ENCODE measurements at regions of chr22 and their contacts with region 1.

Region 1: DNA sequence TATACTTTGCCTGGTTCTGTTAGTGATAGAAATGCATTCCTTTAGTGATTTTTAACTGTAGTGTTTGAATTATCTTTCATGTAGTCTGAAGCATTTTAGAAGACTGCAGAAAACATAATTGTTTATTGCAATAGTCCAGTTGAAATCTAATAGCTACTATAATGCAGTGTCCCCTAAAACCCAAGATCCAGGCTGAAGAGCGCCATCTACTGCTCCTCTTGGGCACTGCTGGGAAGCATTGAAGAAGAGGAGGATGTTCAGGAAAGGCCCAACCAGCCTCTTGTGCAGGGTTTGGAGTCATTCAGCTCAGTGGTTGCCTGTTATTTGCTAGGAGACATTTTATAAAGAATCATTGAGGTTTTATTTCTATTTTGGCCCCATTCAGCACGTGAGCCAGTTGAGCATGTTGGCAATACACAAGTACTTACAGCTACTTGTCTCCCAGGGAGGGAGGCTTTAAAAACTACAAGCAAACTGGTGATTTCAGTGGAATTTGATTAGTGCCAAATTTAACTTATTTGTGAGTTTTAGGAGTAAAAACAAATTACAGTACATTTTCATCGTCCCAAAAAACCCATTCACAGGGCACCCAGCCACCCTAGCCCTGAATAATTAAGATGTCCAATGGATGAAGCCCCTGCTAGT is 74.9 kb upstream of the HORMAD2 start:
- DNase-seq: peak; percentile 56 to 74 (median 62)
- H3K4me3 ChIP-seq: no peak overlapping the region
- H3K27ac ChIP-seq: no peak overlapping the region
- H3K4me1 ChIP-seq: no peaks in the 10 kb centered on the region
- H3K27me3 ChIP-seq: no peaks in the 10 kb centered on the region

Region 2: GRCh38 chr22:29580200-29580810 is 425.0 kb before region 1 on chr22:
- CTCF ChIA-PET with region 1: no interaction called
- POLR2A ChIA-PET with region 1: no interaction called
- DNase-seq: peak in 1 of 3 donors; percentile 17
- H3K4me3 ChIP-seq: peak overlapping the region; percentile 18 to 80 (median 78)
- H3K27ac ChIP-seq: peak overlapping the region in 1 of 2 experiments; percentile 77
- H3K4me1 ChIP-seq: peaks cover 0 to 17% (median 13%) of the 10 kb centered on the region in 4 experiments
- H3K27me3 ChIP-seq: no peaks in the 10 kb centered on the region

Region 3: DNA sequence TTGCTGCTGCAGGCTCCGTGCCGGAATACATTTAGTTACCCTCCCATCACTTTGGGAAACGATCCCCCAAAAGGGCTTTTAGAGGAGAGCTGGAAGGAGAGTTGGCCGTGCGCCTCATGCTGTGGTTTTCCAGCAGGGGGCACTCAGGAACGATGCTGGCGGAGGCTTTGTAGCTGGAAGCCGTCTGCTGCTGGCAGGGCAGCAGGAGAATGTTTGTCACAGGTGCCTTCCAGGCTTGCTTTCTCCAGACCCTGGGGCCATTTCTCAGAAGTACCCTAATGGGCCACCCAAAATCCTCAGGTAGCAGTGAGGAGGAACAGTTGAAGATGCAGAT is 315.5 kb before region 1 on chr22:
- CTCF ChIA-PET with region 1: interaction called, 18 read pairs
- POLR2A ChIA-PET with region 1: no interaction called
- DNase-seq: peak; percentile 33 to 61 (median 50)
- H3K4me3 ChIP-seq: no peak overlapping the region
- H3K27ac ChIP-seq: no peak overlapping the region
- H3K4me1 ChIP-seq: no peaks in the 10 kb centered on the region
- H3K27me3 ChIP-seq: no peaks in the 10 kb centered on the region

Region 4: GRCh38 chr22:29954203-29954855 is 51.0 kb before region 1 on chr22:
- CTCF ChIA-PET with region 1: no interaction called
- POLR2A ChIA-PET with region 1: no interaction called
- DNase-seq: peak in 1 of 3 donors; percentile 14
- H3K4me3 ChIP-seq: no peak overlapping the region
- H3K27ac ChIP-seq: no peak overlapping the region
- H3K4me1 ChIP-seq: peaks cover 2 to 13% (median 3%) of the 10 kb centered on the region in 4 experiments
- H3K27me3 ChIP-seq: no peaks in the 10 kb centered on the region

Region 5: DNA sequence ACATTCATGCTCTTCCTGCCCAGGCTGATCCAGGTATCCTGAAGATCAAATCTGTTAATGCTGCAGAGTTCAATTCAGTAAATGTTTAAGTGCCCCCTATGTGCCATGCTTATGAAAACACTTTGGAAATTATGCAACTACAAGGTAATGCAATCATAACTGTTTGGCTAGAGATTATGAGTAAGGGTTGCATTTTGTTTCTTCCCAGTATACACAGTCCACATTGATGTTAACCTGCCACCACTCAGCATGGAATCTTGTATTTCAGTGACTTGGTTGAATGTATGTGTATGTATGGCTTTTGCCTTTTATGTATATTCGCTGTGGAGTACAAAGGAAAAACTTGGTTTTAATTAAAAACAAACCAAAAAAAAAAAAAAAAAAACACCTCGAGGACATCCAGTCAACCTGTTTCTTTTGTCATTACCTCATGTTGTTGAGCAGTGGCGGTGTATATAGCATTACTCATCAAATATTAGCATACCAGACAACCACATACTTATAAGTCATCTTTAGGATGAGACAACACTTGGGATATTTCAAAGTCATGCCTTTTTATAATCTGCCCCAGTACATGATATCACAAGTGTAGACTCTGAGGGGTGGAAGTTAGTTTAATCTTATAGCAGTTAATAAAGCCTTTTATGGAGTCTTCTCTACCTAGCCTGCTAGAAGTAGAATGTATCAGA is 11.2 kb before region 1 on chr22:
- CTCF ChIA-PET with region 1: interaction called, 19 read pairs
- POLR2A ChIA-PET with region 1: no interaction called
- DNase-seq: peak in 2 of 3 donors; percentile 6 to 14
- H3K4me3 ChIP-seq: no peak overlapping the region
- H3K27ac ChIP-seq: no peak overlapping the region
- H3K4me1 ChIP-seq: peaks cover 0 to 6% (median 0%) of the 10 kb centered on the region in 4 experiments
- H3K27me3 ChIP-seq: no peaks in the 10 kb centered on the region

Region 6: DNA sequence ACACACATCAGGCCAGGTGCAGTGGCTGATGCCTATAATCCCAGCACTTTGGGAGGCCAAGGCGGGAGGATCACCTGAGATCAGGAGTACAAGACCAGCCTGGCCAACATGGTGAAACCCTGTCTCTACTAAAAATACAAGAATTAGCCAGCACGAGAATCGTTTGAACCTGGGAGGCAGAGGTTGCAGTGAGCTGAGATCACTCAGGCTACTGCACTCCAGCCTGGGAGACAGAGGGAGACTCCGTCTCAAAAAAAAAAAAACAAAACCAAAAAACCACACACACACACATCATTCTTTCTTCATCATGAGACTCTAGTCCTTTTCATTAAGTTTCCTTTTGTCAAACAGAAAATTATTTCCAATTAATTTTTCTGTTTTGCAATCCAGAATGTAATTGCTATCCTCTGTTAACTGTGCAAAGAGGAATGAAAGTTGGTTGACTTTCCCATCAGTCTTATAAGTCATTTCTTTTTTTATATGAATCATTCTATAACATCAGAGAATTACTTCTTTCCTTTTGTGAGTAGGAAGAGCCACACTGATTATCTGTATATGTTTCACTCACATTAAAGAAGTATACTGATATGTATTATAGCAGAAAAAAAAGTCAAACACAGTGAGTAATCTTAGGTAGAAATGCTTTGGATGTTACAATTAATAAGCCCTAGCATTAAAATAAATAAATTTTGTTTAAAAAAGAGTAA is 127.1 kb after region 1 on chr22:
- CTCF ChIA-PET with region 1: no interaction called
- POLR2A ChIA-PET with region 1: no interaction called
- DNase-seq: no peak
- H3K4me3 ChIP-seq: no peak overlapping the region
- H3K27ac ChIP-seq: no peak overlapping the region
- H3K4me1 ChIP-seq: peaks cover 0 to 4% (median under 1%) of the 10 kb centered on the region in 4 experiments
- H3K27me3 ChIP-seq: no peaks in the 10 kb centered on the region